CD4-positive, alpha-beta memory T cell (primary cell): ENCODE measurements at regions of chr16 and their contacts with region 1.

Region 1: DNA sequence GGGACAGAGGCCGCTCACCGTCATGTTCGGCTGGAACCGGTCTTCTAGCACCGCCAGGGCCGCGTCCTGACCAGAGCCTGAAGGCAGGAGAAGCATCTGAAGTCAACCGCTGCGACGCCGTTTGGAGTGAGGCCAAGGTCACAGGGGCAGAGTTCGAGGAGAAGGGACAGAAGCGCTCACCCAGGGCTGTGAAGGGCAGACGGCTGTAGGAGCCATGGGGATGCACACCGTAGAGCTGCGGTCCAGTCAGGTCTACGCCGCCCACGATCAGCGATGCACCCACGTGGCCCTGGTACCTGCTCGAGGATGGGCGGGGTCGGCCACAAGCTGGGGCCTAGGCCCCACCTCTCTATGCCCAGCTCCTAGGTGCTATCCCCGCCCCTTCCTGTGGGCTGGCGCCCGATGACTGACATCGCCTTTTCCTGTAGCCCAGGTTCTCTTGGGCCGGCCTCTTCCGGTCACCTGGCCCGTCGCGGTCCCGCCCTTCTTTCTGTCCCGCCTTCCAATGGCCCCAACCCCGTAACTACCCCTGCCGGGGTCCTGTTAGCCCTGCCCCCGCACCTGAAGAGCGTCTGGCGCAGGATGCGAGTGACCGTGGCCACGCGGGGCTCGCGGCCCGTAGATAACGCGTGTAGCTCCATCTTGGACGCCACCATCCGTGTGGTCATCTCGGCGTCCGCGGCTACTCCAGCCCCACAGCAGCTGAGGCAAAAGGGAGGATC is 1.1 kb downstream of the PSMB10 start:
- DNase-seq: peak; percentile 91 to 99 (median 95)
- H3K4me3 ChIP-seq: peak overlapping the region; percentile 81 to 98
- H3K4me3 Mint-ChIP-seq: peak overlapping the region; percentile 96 to 100 (median 99)
- H3K27ac ChIP-seq: peak overlapping the region; percentile 81
- H3K27ac Mint-ChIP-seq: peak overlapping the region; percentile 96 to 99 (median 98)
- H3K4me1 ChIP-seq: peaks cover 35% of the 10 kb centered on the region
- H3K4me1 Mint-ChIP-seq: peaks cover 21 to 50% (median 40%) of the 10 kb centered on the region in 4 donors
- H3K27me3 ChIP-seq: no peaks in the 10 kb centered on the region
- H3K27me3 Mint-ChIP-seq: no peaks in the 10 kb centered on the region

Region 2: GRCh38 chr16:67719048-67719777 is 216.3 kb before region 1 on chr16 and contains the start of gene GFOD2:
- CTCF ChIA-PET with region 1: no interaction called
- POLR2A ChIA-PET with region 1: interaction called, 14 read pairs
- intact Hi-C with region 1: no loop called
- DNase-seq: peak; percentile 95 to 99 (median 96)
- H3K4me3 ChIP-seq: peak within 1 kb of the TSS; percentile 69 to 81
- H3K4me3 Mint-ChIP-seq: peak within 1 kb of the TSS; percentile 94 to 99 (median 97)
- H3K27ac ChIP-seq: peak within 1 kb of the TSS; percentile 83
- H3K27ac Mint-ChIP-seq: peak within 1 kb of the TSS; percentile 89 to 100 (median 98)
- H3K4me1 ChIP-seq: peaks cover 27% of the 10 kb centered on the region
- H3K4me1 Mint-ChIP-seq: peaks cover 29 to 50% (median 40%) of the 10 kb centered on the region in 4 donors
- H3K27me3 ChIP-seq: no peaks in the 10 kb centered on the region
- H3K27me3 Mint-ChIP-seq: no peaks in the 10 kb centered on the region
- total RNA-seq, gene GFOD2: 18.0 to 19.8 TPM

Region 3: DNA sequence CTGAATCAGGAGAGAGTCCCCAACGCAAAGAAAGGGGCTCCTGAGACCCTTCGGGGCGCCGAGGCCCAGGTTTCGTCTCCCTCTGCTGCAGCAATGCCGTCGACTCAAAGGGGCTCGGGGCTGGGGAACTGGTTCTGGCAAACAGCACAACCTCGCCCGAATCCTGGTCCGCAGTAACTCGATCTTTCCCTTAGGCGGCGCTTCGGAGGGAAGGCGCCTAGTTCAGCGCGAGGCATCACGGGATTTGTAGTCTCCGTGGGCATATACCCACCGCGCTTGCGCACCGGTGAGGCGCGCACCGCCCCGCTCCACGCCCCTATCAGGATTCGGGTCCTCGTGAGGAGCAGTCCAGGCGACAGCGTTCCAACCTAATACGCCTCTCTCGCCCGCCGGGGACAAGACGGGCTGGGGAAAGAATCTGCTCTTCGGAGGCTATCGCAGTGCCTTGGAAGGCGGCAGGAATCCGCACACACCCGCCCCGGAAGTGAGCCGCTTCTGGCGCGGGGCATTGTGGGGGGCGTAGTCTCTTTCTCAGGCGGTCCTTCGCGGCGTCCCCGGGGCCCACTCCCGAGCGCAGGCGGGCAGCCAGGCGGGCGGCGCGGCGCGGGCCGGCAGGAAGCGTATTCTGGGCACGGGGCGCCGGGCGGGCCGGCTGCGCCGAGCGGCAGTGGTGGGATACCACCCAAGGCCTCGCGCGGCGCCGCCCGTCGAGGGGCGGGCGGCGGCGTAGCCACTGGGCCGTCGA is 93.6 kb before region 1 on chr16 and contains the start of gene THAP11:
- CTCF ChIA-PET with region 1: interaction called, 6 read pairs
- POLR2A ChIA-PET with region 1: interaction called, 44 read pairs
- intact Hi-C with region 1: loop called (anchors 1 kb)
- DNase-seq: peak; percentile 94 to 98 (median 95)
- H3K4me3 ChIP-seq: peak within 1 kb of the TSS; percentile 74 to 99
- H3K4me3 Mint-ChIP-seq: peak within 1 kb of the TSS; percentile 93 to 98 (median 96)
- H3K27ac ChIP-seq: peak within 1 kb of the TSS; percentile 98
- H3K27ac Mint-ChIP-seq: peak within 1 kb of the TSS; percentile 97 to 99 (median 98)
- H3K4me1 ChIP-seq: peaks cover 38% of the 10 kb centered on the region
- H3K4me1 Mint-ChIP-seq: peaks cover 25 to 48% (median 36%) of the 10 kb centered on the region in 4 donors
- H3K27me3 ChIP-seq: no peaks in the 10 kb centered on the region
- H3K27me3 Mint-ChIP-seq: no peaks in the 10 kb centered on the region
- total RNA-seq, gene THAP11: 56.8 to 58.4 TPM

Region 4: GRCh38 chr16:67951485-67951884 is 15.9 kb after region 1 on chr16:
- CTCF ChIA-PET with region 1: interaction called, 4 read pairs
- POLR2A ChIA-PET with region 1: interaction called, 44 read pairs
- intact Hi-C with region 1: no loop called
- DNase-seq: no peak
- H3K4me3 ChIP-seq: no peak overlapping the region
- H3K4me3 Mint-ChIP-seq: no peak overlapping the region
- H3K27ac ChIP-seq: no peak overlapping the region
- H3K27ac Mint-ChIP-seq: no peak overlapping the region
- H3K4me1 ChIP-seq: no peaks in the 10 kb centered on the region
- H3K4me1 Mint-ChIP-seq: no peaks in the 10 kb centered on the region
- H3K27me3 ChIP-seq: no peaks in the 10 kb centered on the region
- H3K27me3 Mint-ChIP-seq: no peaks in the 10 kb centered on the region

Region 5: DNA sequence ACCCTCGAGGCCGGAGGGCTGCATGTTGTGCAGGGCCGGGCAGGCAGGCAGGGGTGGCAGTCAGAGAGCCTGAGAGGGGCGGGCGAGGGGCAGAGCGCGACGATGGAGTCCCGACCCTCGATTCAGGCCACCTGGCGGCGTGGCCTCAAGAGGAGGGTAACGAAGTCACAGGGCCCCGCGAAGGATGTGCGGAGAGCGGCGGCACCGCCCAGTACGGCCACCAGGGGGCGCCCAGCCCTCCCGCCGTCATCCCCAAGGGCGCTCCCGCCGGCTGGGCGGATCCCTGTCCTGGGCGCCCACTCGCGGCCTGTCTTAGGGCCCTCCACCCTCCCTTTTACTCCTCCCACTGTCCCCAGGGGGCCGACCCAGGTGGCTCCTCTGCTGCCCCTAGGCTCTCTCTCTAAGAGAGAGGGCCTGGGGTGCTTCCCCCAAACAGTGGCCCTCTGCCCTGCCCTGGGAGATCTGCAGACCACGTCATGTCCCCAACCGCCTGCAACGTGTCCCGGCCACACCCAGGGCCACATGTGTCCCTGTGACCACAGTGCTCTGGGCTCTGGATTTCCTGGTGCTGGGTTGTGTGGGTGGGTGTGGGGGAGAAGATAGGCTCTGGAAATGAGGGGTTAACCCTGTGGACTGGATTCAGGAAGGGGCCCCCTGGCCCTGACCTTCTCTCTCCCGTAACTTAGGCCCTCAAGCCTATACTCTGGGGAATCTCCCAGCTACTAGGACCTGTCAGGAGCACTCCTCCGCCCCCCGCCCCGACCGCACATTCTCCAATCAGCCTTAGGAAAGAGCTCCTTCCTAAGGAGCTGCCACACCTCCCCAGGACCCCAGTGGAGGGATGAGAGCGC is 57.9 kb after region 1 on chr16:
- CTCF ChIA-PET with region 1: no interaction called
- POLR2A ChIA-PET with region 1: interaction called, 33 read pairs
- intact Hi-C with region 1: loop called (anchors 2 kb)
- DNase-seq: peak; percentile 81 to 83 (median 81)
- H3K4me3 ChIP-seq: peak overlapping the region; percentile 17 to 70
- H3K4me3 Mint-ChIP-seq: peak overlapping the region; percentile 85 to 92 (median 88)
- H3K27ac ChIP-seq: peak overlapping the region; percentile 73
- H3K27ac Mint-ChIP-seq: peak overlapping the region; percentile 95 to 98 (median 96)
- H3K4me1 ChIP-seq: peaks cover 45% of the 10 kb centered on the region
- H3K4me1 Mint-ChIP-seq: peaks cover 16 to 53% (median 35%) of the 10 kb centered on the region in 4 donors
- H3K27me3 ChIP-seq: no peaks in the 10 kb centered on the region
- H3K27me3 Mint-ChIP-seq: no peaks in the 10 kb centered on the region

Region 6: GRCh38 chr16:68040507-68041288 is 105.1 kb after region 1 on chr16:
- CTCF ChIA-PET with region 1: interaction called, 6 read pairs
- POLR2A ChIA-PET with region 1: interaction called, 14 read pairs
- intact Hi-C with region 1: loop called (anchors 1 kb)
- DNase-seq: peak; percentile 84 to 88 (median 85)
- H3K4me3 ChIP-seq: no peak overlapping the region
- H3K4me3 Mint-ChIP-seq: no peak overlapping the region
- H3K27ac ChIP-seq: no peak overlapping the region
- H3K27ac Mint-ChIP-seq: peak overlapping the region; percentile 29 to 77 (median 44)
- H3K4me1 ChIP-seq: peaks cover 9% of the 10 kb centered on the region
- H3K4me1 Mint-ChIP-seq: peaks cover 6 to 16% (median 12%) of the 10 kb centered on the region in 4 donors
- H3K27me3 ChIP-seq: no peaks in the 10 kb centered on the region
- H3K27me3 Mint-ChIP-seq: no peaks in the 10 kb centered on the region